ENCODE measurements at regions of chr11 and their contacts with region 1.

Region 1: DNA sequence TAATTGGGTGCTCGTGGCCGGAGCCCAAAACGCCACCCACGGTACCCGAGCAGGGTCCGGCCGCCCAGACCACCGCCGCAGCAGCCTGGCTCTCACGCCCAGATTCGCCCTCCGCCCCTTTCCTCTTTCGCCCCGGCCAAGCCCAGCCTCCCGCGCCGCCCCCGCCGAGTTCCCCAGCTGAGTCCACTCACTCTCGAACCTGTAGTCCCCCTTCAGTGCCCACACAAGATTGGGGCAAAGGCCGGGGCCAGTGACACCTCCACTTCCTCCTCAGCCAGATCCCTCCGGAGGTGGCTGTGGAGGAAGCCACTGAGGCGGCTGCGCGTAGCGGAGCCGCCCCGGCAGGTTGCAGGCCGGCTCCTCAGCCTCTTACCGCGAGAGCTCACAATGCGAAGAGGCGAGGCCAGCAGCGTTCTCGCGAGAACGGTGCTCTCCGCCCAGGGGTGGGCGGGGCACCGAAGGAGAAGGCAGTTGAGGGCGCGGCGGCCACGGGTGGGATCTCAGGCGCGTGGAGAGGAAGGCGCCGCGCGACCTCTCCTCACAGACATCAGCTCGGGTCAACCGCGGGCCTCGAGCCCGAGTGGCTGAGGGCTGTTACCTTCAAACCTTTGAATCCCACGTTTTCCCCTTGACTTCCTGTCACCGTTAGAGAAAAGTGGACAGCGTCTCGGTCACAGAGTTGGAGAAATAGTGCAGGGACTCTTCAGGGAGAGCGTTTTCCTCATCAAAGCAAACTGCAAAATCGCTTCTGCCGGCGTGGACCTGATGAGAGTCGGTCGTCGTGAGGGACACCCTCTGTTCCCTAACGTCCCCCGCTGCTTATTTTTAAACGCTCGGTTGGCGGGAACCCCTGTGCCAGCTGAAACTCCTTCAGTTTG is at the start of gene BTBD10:
- DNase-seq: peak; percentile 91
- ATAC-seq: peak; percentile 99
- H3K4me3 Mint-ChIP-seq: peak within 1 kb of the TSS; percentile 99
- H3K27ac Mint-ChIP-seq: peak within 1 kb of the TSS; percentile 100
- H3K4me1 Mint-ChIP-seq: peaks cover 28% of the 10 kb centered on the region
- H3K27me3 Mint-ChIP-seq: peaks cover 5% of the 10 kb centered on the region
- total RNA-seq, gene BTBD10: 20.1 to 21.8 TPM

Region 2: GRCh38 chr11:13450832-13451397 is 12.2 kb before region 1 on chr11:
- POLR2A ChIA-PET with region 1: interaction called, 29 read pairs
- DNase-seq: no peak
- ATAC-seq: peak; percentile 89
- H3K4me3 Mint-ChIP-seq: peak overlapping the region; percentile 35
- H3K27ac Mint-ChIP-seq: peak overlapping the region; percentile 68
- H3K4me1 Mint-ChIP-seq: peaks cover 32% of the 10 kb centered on the region
- H3K27me3 Mint-ChIP-seq: no peaks in the 10 kb centered on the region

Region 3: DNA sequence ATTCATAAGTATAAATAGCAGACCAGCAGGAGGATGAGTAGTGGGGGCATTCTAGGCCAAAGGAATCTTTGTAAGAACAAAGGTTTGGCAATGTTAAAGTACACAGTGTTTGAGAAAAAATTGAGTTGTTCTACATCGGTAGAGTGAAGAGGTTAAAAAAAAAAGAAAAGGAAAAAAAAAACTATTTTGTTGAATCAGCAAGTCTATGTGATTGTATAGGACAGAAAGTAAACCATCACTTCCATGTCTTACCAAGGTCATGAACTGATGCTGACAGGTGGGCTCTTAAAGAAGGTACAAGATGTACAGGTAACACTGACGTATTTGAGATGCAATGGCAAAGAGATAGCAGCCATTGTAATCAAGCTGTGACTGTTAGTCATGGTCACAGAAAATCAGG is 62.1 kb after region 1 on chr11:
- POLR2A ChIA-PET with region 1: no interaction called
- DNase-seq: no peak
- ATAC-seq: no peak
- H3K4me3 Mint-ChIP-seq: no peak overlapping the region
- H3K27ac Mint-ChIP-seq: no peak overlapping the region
- H3K4me1 Mint-ChIP-seq: no peaks in the 10 kb centered on the region
- H3K27me3 Mint-ChIP-seq: peaks cover 9% of the 10 kb centered on the region

Region 4: DNA sequence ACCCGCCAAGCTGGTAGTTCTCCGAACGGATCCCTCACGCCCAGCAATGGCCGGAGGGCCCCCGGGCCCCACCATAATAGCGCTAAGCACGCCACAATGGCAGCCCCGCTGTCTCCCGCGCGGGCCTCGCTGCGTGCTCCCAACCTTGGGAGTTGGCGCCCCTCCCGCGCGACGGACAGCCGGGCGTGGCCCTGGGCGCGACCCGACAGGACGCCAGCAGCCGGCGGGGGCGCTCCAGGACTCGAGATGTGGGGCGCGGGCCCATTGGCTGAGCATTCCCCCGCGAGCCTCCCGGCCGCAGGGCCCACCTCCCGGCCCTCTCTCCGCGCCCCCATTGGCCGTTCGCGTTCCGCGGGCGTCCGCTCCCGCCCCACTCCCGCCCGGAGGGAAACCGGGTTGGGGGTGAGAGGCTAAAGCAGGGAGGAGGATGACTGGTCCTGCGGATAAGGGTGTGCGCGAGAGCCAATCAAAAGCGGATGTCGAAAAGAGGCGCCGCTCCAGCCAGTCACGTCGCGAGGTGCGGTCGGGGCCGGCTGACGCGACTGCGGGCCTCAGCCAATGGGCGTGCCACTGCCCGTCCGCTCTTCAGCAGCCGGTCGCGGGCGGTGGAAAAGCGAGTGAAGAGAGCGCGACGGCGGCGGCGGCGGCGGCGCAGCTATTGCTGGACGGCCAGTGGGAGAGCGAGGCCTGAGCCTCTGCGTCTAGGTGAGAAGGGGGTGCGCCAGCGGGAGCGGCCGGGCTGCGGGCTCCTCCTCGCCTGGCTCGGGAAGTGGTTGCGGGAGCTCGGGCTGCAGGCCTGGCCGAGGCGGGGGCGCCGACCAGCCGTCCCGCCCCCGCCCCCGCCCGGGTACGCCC is 205.2 kb after region 1 on chr11 and contains the start of gene FAR1:
- POLR2A ChIA-PET with region 1: interaction called, 11 read pairs
- DNase-seq: peak; percentile 98
- ATAC-seq: peak; percentile 94
- H3K4me3 Mint-ChIP-seq: peak within 1 kb of the TSS; percentile 99
- H3K27ac Mint-ChIP-seq: peak within 1 kb of the TSS; percentile 99
- H3K4me1 Mint-ChIP-seq: peaks cover 40% of the 10 kb centered on the region
- H3K27me3 Mint-ChIP-seq: peaks cover 12% of the 10 kb centered on the region
- total RNA-seq, gene FAR1: 48.9 to 49.7 TPM

Measured in activated naive CD8-positive, alpha-beta T cell treated with anti-CD3 and anti-CD28 coated beads, Interleukin-2, amount 10 ng/mL, durations not matched to agents 7 days and 5 days (primary cell).